ENCODE measurements at regions of chr19 and their contacts with region 1.

Region 1: GRCh38 chr19:2096480-2097329 is at the start of gene IZUMO4:
- DNase-seq: peak; percentile 100
- ATAC-seq: peak; percentile 88
- H3K4me3 Mint-ChIP-seq: peak within 1 kb of the TSS; percentile 90
- H3K27ac Mint-ChIP-seq: peak within 1 kb of the TSS; percentile 96
- H3K4me1 Mint-ChIP-seq: peaks cover 11% of the 10 kb centered on the region
- H3K27me3 Mint-ChIP-seq: no peaks in the 10 kb centered on the region
- total RNA-seq, gene IZUMO4: 16.0 to 17.7 TPM

Region 2: DNA sequence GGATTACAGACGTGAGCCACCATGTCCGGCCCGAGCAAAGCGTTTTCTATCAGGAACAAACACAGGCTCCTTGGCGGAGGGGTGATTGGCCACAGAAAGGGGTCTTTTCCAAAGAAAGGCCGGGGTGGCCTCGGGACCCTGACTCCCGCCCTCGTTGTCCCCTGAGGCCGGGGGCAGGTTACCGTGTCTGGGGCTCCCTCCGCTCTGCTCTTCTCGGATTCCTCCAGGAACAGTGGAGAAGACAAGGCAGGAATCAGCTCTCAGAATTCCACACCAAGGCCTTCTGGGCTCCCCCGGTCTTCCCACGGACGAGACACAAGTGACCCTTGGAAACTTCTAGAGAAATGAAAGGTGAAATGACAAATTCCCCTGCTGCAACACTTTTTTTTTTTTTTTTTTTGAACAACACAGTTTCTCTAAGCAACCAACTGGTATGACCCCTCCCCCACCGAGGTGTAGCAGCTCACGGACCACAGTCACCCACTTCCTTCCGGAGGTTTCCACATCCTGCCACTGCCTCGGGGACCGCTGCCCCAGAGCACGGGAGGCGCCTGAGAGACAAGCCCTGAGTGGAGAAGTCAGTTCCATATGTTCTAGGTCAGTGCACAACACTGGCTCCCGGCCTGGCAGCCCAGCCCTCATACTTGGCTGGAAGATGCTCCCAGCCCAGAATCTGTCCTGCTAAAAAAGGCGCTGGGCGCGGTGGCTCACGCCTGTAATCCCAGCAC is 11.5 kb before region 1 on chr19:
- POLR2A ChIA-PET with region 1: interaction called, 180 read pairs
- DNase-seq: peak; percentile 93
- ATAC-seq: peak; percentile 56
- H3K4me3 Mint-ChIP-seq: peak overlapping the region; percentile 97
- H3K27ac Mint-ChIP-seq: peak overlapping the region; percentile 99
- H3K4me1 Mint-ChIP-seq: peaks cover 60% of the 10 kb centered on the region
- H3K27me3 Mint-ChIP-seq: no peaks in the 10 kb centered on the region

Region 3: DNA sequence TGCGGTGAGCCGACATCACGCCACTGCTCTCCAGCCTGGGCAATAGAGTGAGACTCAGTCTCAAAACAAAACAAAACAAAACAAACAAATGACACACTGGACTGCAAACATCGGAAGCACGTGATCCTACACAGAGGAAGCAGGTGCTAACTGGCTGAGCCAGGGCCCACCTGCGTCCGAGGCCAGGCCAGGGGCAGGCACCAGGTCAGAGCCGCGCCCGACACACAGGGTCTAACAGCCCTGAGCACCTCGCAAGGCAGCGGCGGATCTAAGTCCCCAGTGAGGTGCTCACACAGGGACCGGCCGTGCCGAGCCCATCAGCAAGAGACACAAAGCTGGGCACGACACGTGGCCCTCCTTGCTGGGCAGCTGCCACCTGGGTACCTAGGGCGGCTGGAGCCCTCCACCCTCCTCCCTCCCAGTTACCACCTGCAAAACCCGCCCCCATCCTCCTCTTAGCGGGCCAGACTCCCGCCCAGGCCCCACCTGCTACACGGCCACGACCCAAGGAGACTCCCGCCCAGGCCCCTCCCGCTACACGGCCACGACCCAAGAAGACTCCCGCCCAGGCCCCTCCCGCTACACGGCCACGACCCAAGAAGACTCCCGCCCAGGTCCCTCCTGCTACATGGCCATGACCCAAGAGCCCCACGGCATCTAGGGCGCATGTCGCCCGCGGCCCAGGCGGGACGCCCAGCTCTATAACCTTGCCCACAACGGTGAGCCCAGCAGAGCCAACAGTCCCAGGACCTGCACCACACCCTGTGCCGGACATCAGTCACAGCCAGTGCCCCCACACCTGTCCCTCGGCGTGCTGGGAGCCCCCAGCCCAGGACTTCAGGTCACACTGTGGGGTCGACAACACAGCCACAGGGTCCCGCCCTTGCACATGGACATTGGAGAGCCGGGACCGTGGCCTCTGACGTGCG is 39.0 kb after region 1 on chr19:
- POLR2A ChIA-PET with region 1: no interaction called
- DNase-seq: no peak
- ATAC-seq: no peak
- H3K4me3 Mint-ChIP-seq: no peak overlapping the region
- H3K27ac Mint-ChIP-seq: no peak overlapping the region
- H3K4me1 Mint-ChIP-seq: peaks cover 2% of the 10 kb centered on the region
- H3K27me3 Mint-ChIP-seq: no peaks in the 10 kb centered on the region

Measured in activated naive CD8-positive, alpha-beta T cell treated with anti-CD3 and anti-CD28 coated beads, Interleukin-2, amount 10 ng/mL, durations not matched to agents 7 days and 5 days (primary cell).